AG04449 (cell line): ENCODE measurements at regions of chr14 and their contacts with region 1.

Region 1: DNA sequence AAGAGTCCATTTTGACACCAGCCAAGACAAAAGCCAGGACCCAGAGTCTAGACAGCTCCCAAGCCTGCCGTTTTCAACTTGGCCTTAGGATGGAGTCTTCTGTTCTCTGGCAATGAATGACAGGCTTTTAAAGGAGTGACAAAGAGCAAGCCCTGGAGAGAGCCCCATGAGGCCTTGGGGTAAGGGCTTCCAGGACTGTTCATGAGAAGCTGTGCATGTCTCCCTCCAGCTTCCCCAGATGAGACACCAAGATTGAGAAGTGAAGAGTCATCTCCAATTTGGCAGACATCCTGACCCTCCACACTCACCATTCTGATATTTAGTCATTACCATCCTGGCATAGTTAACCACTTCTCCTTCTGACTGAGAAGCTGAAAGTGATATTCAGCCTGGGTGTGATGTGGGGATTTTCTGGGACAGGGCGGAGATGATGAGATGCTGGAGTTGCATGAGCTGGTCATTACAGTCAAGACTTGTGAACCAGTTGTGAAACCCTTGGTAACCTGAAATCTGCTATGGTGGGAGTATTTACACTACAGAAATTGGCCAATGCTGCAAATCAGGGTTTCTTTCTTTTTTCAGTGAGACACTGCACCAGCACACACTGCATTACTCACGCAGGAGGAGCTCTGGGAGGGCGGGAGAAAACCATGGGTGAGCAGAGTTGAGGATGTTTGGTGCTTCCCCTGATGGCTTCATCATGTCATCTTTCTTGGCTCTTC is 77.8 kb downstream of the VCPKMT start:
- DNase-seq: peak; percentile 95
- H3K4me3 ChIP-seq: no peak overlapping the region
- CTCF ChIP-seq: no peak

Region 2: GRCh38 chr14:50003213-50004031 is 35.1 kb before region 1 on chr14:
- CTCF ChIA-PET with region 1: no interaction called
- POLR2A ChIA-PET with region 1: interaction called, 28 read pairs
- DNase-seq: no peak
- H3K4me3 ChIP-seq: peak overlapping the region; percentile 54
- CTCF ChIP-seq: no peak

Region 3: GRCh38 chr14:50023671-50024490 is 14.7 kb before region 1 on chr14:
- CTCF ChIA-PET with region 1: interaction called, 9 read pairs
- POLR2A ChIA-PET with region 1: interaction called, 15 read pairs
- DNase-seq: no peak
- H3K4me3 ChIP-seq: peak overlapping the region; percentile 31
- CTCF ChIP-seq: no peak

Region 4: DNA sequence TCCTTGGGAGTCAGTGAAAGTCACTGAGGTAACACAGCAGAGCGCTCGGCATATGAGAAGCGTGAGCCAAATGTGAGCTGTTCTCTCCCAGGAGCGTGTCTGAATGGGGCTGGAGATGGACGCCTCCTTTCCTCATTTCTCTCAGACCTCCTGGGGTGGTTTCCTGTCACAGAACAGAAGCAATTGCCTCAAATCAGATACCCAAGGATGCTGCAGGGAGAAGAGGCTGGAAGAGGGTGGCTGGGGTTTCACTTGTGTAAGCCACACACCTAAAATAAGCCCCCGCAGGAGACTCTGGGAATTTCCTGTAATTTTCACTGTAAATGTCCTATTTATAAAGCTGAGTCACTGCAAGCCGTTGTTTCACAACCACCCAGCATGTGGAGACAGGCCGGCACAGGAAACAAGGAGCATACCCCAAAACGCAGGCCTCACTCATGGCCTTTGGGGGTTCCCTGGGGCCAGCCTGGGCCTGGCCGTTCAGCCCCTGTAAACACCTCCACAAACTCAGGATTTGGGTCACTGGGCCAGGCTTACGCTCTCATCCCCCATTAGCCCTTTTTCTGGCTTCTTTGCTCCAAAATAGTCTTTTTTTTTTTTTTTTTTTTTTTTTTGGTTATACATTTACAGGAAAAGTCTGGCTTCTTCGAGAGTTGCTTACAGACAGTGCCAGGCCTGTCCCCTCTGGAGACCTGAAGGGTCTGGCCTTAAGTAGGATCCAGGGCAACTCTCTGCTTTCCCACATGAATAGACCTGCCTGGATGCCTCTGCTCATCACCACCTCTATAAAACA is 22.5 kb after region 1 on chr14:
- CTCF ChIA-PET with region 1: interaction called, 3 read pairs
- POLR2A ChIA-PET with region 1: interaction called, 11 read pairs
- DNase-seq: peak; percentile 83
- H3K4me3 ChIP-seq: peak overlapping the region; percentile 2
- CTCF ChIP-seq: no peak